Activated naive CD8-positive, alpha-beta T cell treated with anti-CD3 and anti-CD28 coated beads, Interleukin-2, amount 10 ng/mL, durations not matched to agents 7 days and 5 days (primary cell): ENCODE measurements at regions of chr17 and their contacts with region 1.

Region 1: GRCh38 chr17:7885367-7886226 is 3.0 kb upstream of the CHD3 start:
- DNase-seq: peak; percentile 75
- ATAC-seq: peak; percentile 8
- H3K4me3 Mint-ChIP-seq: peak overlapping the region; percentile 48
- H3K27ac Mint-ChIP-seq: peak overlapping the region; percentile 67
- H3K4me1 Mint-ChIP-seq: peaks cover 10% of the 10 kb centered on the region
- H3K27me3 Mint-ChIP-seq: no peaks in the 10 kb centered on the region

Region 2: GRCh38 chr17:7867881-7868329 is 17.7 kb before region 1 on chr17:
- POLR2A ChIA-PET with region 1: interaction called, 15 read pairs
- DNase-seq: no peak
- ATAC-seq: peak; percentile 88
- H3K4me3 Mint-ChIP-seq: peak overlapping the region; percentile 80
- H3K27ac Mint-ChIP-seq: peak overlapping the region; percentile 86
- H3K4me1 Mint-ChIP-seq: peaks cover 33% of the 10 kb centered on the region
- H3K27me3 Mint-ChIP-seq: no peaks in the 10 kb centered on the region

Region 3: DNA sequence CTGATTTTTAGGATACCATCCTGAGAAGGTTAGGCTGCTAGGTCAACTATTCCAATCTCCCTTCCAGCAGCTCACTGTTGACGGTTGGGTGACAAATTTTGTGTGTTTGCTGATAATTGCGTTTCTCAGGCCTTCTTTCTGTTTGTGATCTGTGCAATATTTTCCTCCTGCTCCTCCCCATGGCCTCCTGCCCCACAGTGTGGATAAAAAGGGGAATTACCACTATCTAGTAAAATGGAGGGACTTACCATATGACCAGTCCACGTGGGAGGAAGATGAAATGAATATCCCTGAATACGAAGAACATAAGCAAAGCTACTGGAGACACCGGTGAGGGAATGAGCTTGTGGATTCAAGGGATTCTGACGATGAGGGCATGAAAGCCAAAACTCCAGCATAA is 12.2 kb after region 1 on chr17:
- POLR2A ChIA-PET with region 1: no interaction called
- DNase-seq: no peak
- ATAC-seq: no peak
- H3K4me3 Mint-ChIP-seq: no peak overlapping the region
- H3K27ac Mint-ChIP-seq: no peak overlapping the region
- H3K4me1 Mint-ChIP-seq: peaks cover 11% of the 10 kb centered on the region
- H3K27me3 Mint-ChIP-seq: no peaks in the 10 kb centered on the region

Region 4: DNA sequence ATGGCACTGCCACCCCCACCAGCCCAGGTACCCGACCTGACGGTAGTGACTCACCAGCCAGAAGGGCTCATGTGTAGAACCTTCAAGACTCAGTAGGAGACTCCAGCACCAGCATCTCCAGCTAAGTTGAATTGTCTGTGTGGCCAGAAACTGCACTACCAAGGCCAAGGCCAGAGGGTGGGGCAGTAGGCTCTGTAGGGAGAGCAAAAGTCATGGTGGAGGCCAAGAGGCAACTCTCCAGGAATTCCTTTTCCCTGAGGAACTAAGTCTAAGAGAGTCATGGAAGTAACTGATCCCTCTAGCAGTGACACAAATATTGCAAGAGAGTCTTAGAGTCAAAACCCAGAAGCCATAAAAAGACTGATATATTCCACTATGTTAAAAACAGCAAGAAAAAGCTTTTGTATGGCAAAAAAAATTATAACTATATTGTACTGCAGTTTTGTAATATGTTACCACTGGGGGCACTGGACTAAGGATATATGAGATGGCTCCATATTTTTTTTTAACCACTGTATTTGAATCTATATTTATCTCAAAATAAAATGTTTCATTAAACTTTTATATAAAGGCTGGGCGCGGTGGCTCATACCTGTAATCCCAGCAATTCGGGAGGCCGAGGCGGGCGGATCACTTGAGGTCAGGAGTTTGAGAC is 86.7 kb after region 1 on chr17:
- POLR2A ChIA-PET with region 1: no interaction called
- DNase-seq: no peak
- ATAC-seq: no peak
- H3K4me3 Mint-ChIP-seq: no peak overlapping the region
- H3K27ac Mint-ChIP-seq: no peak overlapping the region
- H3K4me1 Mint-ChIP-seq: no peaks in the 10 kb centered on the region
- H3K27me3 Mint-ChIP-seq: peaks cover 22% of the 10 kb centered on the region